ENCODE measurements at regions of chr10 and their contacts with region 1.

Region 1: DNA sequence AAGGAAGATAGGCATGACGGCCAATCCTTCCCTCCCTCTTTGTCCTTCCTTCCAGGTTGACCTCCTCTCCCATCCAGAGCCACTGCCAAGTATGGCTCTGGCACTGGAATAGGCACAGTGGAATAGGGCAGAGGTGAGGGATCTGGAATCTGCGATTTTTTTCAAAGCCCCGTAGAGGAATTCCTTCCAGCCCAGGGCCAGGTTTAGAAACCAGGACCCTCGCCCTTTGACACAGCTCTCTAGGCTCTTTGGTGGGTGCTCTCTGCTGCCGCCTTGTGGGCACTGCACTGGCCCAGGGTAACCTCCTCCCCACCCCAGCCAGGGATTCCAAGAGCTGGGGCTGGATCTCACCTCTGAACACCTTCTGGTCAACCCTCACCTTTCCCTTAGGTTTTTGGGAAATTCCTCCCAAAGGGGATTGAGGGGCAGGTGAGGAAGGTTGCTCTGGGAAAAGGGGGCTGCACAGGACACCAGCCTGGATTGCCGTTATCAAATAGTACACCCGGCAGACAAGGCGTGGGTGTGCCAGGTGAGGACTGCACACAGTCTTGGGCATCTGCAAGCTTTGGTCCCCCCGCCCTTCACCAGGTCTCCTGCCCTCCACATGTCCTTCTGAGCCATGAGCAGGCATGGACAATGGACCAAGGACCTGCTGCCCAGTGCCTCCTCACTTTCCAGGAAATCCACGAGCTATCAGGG is 22.8 kb downstream of the C10orf105 start:
- DNase-seq: peak; percentile 80
- H3K4me3 ChIP-seq: no peak overlapping the region
- H3K27ac ChIP-seq: no peak overlapping the region
- H3K4me1 ChIP-seq: no peaks in the 10 kb centered on the region
- H3K27me3 ChIP-seq: no peaks in the 10 kb centered on the region
- CTCF ChIP-seq: peak; percentile 82

Region 2: GRCh38 chr10:71486484-71487114 is 210.2 kb before region 1 on chr10:
- intact Hi-C with region 1: loop called (anchors 10 kb)
- DNase-seq: peak; percentile 75
- H3K4me3 ChIP-seq: no peak overlapping the region
- H3K27ac ChIP-seq: no peak overlapping the region
- H3K4me1 ChIP-seq: no peaks in the 10 kb centered on the region
- H3K27me3 ChIP-seq: no peaks in the 10 kb centered on the region
- CTCF ChIP-seq: peak; percentile 46